Aorta (tissue), 5 donors: ENCODE measurements at regions of chr4 and their contacts with region 1.

Region 1: GRCh38 chr4:148216866-148217814 is 225.1 kb downstream of the NR3C2 start:
- DNase-seq: no peak
- ATAC-seq: no peak
- H3K4me3 ChIP-seq: no peak overlapping the region
- H3K27ac ChIP-seq: no peak overlapping the region
- H3K4me1 ChIP-seq: peaks cover 6 to 11% of the 10 kb centered on the region in 2 donors
- H3K27me3 ChIP-seq: no peaks in the 10 kb centered on the region

Region 2: DNA sequence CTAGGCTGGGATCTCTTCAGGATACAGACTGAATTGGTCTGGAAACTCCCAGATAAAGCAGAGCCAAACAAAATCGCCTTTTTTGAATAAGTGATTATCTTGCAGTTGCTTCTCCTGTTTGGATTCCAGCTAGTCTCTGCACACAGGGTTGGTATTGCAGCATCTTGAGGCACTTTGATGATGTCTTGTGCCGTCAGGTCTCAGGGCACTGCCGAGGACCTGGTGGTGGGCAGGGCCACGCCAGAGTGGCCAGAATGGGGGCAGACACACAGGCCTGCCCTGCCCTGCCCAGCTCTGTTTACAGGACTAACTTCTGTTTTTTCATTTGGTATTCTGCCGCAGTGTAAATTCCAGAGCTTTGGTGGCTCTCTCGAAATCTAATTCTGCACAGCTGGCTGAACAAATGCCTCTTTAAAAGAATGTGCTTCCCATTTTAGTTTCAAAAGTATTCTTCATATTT is 51.0 kb before region 1 on chr4:
- intact Hi-C with region 1: loop called in 1 of 2 experiments (anchors 10 kb)
- DNase-seq: peak in 1 of 2 donors; percentile 64
- ATAC-seq: peak; percentile 58
- H3K4me3 ChIP-seq: peak overlapping the region in 1 of 2 donors; percentile 37
- H3K27ac ChIP-seq: peak overlapping the region; percentile 5 to 61
- H3K4me1 ChIP-seq: no peaks in the 10 kb centered on the region
- H3K27me3 ChIP-seq: no peaks in the 10 kb centered on the region

Region 3: GRCh38 chr4:148434075-148434773 is 217.1 kb after region 1 on chr4:
- intact Hi-C with region 1: loop called in 1 of 2 experiments (anchors 10 kb)
- DNase-seq: no peak
- ATAC-seq: no peak
- H3K4me3 ChIP-seq: no peak overlapping the region
- H3K27ac ChIP-seq: no peak overlapping the region
- H3K4me1 ChIP-seq: no peaks in the 10 kb centered on the region
- H3K27me3 ChIP-seq: no peaks in the 10 kb centered on the region